Mammary epithelial cell (primary cell): ENCODE measurements at regions of chr20 and their contacts with region 1.

Region 1: DNA sequence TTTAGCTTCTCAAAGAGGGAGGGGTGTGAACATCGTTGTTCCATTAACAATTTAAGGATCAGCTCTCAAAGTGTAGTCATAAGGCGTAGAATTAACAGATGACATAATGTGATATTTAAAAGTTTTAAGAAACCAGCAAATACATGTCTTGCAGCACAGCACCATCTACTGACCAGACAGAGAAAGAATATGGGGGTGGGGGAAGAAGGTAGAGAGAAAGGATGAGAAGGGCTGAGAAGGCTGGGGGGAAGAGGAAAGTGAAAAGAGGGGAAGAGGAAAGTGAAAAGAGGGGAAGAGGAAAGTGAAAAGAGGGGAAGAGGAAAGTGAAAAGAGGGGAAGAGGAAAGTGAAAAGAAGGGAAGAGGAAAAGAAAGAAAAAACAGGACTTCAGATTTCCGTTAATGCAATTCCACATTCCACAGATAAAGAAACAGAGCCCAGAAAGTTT is 80.9 kb downstream of the HAO1 start:
- DNase-seq: peak; percentile 65
- H3K4me3 ChIP-seq: no peak overlapping the region
- H3K27ac ChIP-seq: peak overlapping the region; percentile 36
- H3K4me1 ChIP-seq: peaks cover 44% of the 10 kb centered on the region
- H3K27me3 ChIP-seq: no peaks in the 10 kb centered on the region
- CTCF ChIP-seq: peak; percentile 55 to 77

Region 2: DNA sequence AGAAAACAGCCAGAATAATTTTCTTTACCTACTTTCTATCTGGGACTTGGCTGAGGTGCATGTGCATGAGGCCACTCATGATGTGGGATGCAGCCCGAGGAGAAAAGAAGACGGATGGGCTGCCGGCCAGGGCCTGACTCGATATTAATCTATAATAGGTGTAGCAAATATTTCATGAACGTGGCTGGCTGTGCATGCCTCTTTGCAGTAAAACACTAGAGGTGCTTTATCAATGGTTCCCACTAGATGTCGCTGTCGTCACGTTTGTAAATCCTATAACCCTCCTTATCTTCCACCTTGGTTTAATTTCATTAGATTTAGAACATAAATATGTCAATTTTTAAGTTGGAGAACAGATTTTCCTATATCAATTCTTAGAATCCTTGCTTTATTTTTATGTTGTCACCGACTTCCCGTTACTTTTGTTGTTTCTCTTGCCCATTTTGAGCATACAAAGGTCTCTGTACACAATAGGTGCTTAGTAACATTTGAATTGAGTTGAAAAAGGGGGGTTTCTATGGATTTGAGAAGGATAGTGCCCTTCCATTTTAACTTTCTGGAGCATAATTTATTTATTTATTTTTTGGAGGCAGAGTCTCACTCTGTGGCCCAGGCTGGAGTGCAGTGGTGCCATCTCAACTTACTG is 1716.9 kb before region 1 on chr20:
- CTCF ChIA-PET with region 1: no interaction called
- dilution Hi-C with region 1: no loop called
- in situ Hi-C with region 1: no loop called
- intact Hi-C with region 1: loop called (anchors 10 kb)
- DNase-seq: peak; percentile 36
- H3K4me3 ChIP-seq: no peak overlapping the region
- H3K27ac ChIP-seq: no peak overlapping the region
- H3K4me1 ChIP-seq: no peaks in the 10 kb centered on the region
- H3K27me3 ChIP-seq: no peaks in the 10 kb centered on the region
- CTCF ChIP-seq: peak; percentile 76 to 88

Region 3: GRCh38 chr20:6828794-6829423 is 1030.5 kb before region 1 on chr20:
- CTCF ChIA-PET with region 1: no interaction called
- dilution Hi-C with region 1: no loop called
- in situ Hi-C with region 1: no loop called
- intact Hi-C with region 1: loop called (anchors 1 kb)
- DNase-seq: peak; percentile 68
- H3K4me3 ChIP-seq: no peak overlapping the region
- H3K27ac ChIP-seq: peak overlapping the region; percentile 39
- H3K4me1 ChIP-seq: peaks cover 11% of the 10 kb centered on the region
- H3K27me3 ChIP-seq: no peaks in the 10 kb centered on the region
- CTCF ChIP-seq: peak; percentile 73 to 76

Region 4: DNA sequence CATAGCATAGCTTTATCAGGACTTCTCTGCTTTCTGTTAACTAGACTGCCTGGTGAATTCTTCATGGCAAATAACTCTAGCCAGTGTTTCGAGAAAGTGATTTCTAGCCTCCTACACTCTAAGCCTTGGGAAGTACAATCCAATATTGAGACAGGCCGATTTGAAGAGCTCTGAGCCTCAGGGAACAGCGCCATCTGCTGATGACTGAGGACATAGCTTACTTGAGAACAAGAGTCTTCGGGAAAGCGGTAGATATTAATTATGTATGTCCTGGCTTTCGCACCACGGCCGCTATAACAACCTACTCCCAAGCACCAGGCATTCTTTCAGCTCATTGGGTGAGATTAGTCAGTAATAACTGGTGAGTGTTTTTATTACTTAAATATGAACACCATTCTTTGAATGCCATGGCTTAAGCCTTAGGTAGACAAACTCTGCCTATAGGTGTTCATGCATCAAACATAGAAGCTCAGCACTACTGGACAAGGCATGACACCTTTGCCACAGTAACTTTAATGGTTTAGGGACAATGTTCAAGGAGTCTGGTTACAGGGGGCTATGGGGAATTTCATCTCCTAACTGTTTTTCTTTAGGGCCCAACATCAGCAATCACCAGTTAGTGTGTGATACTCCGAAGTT is 573.3 kb before region 1 on chr20:
- CTCF ChIA-PET with region 1: no interaction called
- dilution Hi-C with region 1: no loop called
- in situ Hi-C with region 1: no loop called
- intact Hi-C with region 1: loop called (anchors 5 kb)
- DNase-seq: peak; percentile 71
- H3K4me3 ChIP-seq: no peak overlapping the region
- H3K27ac ChIP-seq: no peak overlapping the region
- H3K4me1 ChIP-seq: no peaks in the 10 kb centered on the region
- H3K27me3 ChIP-seq: no peaks in the 10 kb centered on the region
- CTCF ChIP-seq: peak; percentile 92 to 93

Region 5: DNA sequence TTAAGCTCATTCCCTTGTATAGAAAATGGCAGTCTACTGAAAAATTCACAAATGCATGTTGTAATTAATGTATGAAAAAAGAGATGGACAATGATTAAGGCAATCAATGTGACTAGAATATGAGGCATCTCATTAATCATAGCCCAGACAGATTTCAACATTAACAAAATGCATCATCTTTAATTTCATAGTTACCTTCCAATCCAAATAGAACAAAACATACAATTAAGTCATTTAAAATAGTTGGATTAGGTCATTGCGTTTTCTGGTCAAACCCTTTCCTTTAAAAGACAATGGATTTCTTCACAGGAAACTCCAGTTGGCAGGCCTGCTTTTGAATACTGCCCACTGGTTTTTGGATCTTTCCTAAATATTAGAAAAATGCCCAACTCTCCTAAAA is 123.0 kb before region 1 on chr20:
- CTCF ChIA-PET with region 1: no interaction called
- dilution Hi-C with region 1: no loop called
- in situ Hi-C with region 1: no loop called
- intact Hi-C with region 1: loop called (anchors 1 kb)
- DNase-seq: peak; percentile 86
- H3K4me3 ChIP-seq: no peak overlapping the region
- H3K27ac ChIP-seq: peak overlapping the region; percentile 95
- H3K4me1 ChIP-seq: peaks cover 28% of the 10 kb centered on the region
- H3K27me3 ChIP-seq: no peaks in the 10 kb centered on the region
- CTCF ChIP-seq: no peak

Region 6: DNA sequence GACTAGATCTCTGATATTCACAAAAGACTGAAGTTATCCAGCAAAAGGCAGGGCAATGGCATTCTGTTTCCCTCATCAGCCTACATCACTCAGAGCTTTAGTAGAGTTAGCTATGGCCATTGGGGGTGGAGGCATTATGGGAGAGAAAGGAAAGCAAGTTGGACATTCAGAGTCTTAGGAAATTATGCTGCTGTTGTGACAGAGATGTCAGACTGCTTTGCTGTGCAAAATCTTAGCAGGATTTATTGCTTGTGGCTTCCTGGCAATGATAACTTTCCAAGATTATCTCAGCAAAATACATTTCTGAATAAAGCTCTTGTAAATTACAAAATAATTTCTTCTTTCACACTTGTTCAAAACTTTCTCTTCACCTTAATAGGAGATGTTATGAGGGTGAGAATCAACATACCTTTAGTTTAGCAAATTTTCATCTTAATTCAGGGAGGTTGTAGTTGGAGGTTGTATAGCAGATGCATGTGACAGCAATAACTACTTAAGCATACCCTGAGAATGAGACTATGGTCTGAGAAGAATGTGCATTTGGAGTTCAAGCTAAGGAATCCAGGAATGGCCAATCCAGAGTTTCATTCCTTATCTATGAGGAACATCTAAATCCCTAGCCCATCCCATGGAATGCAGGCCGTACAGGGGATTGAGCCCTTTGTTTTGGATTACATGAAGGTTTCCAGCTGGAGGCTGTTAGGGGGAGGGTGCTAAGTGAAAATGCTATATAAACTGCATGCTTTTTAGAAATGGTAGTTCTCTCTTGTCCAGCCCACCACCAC is 98.9 kb before region 1 on chr20:
- CTCF ChIA-PET with region 1: no interaction called
- dilution Hi-C with region 1: no loop called
- in situ Hi-C with region 1: no loop called
- intact Hi-C with region 1: no loop called
- DNase-seq: no peak
- H3K4me3 ChIP-seq: no peak overlapping the region
- H3K27ac ChIP-seq: no peak overlapping the region
- H3K4me1 ChIP-seq: no peaks in the 10 kb centered on the region
- H3K27me3 ChIP-seq: no peaks in the 10 kb centered on the region
- CTCF ChIP-seq: no peak

Region 7: GRCh38 chr20:7911586-7912330 is 52.4 kb after region 1 on chr20:
- CTCF ChIA-PET with region 1: no interaction called
- dilution Hi-C with region 1: no loop called
- in situ Hi-C with region 1: no loop called
- intact Hi-C with region 1: no loop called
- DNase-seq: peak; percentile 81
- H3K4me3 ChIP-seq: no peak overlapping the region
- H3K27ac ChIP-seq: peak overlapping the region; percentile 63
- H3K4me1 ChIP-seq: peaks cover 24% of the 10 kb centered on the region
- H3K27me3 ChIP-seq: no peaks in the 10 kb centered on the region
- CTCF ChIP-seq: no peak

Region 8: DNA sequence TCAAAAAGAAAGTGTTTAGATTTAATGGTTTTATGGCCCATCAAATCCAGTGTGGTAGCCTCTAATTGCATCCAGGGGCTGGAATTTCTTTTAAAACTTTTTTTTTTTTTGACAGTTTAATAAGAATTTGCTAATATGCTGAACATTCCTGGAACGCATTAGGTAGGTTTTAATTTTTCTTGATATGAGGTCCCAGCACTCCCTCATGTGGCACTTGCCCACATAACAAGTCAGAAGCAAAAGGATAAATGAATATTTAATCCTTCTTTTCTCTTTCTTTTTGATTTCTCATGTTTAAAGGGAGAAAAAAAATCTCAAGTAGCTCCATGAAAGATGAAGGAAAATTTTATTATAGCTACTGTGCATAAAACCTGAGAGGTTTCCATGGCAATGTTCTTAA is 67.4 kb after region 1 on chr20:
- CTCF ChIA-PET with region 1: no interaction called
- dilution Hi-C with region 1: no loop called
- in situ Hi-C with region 1: no loop called
- intact Hi-C with region 1: loop called (anchors 2 kb)
- DNase-seq: no peak
- H3K4me3 ChIP-seq: no peak overlapping the region
- H3K27ac ChIP-seq: no peak overlapping the region
- H3K4me1 ChIP-seq: peaks cover 23% of the 10 kb centered on the region
- H3K27me3 ChIP-seq: no peaks in the 10 kb centered on the region
- CTCF ChIP-seq: peak; percentile 67 to 75

Region 9: GRCh38 chr20:8043687-8044282 is 184.4 kb after region 1 on chr20:
- CTCF ChIA-PET with region 1: no interaction called
- dilution Hi-C with region 1: no loop called
- in situ Hi-C with region 1: no loop called
- intact Hi-C with region 1: no loop called
- DNase-seq: peak; percentile 53
- H3K4me3 ChIP-seq: no peak overlapping the region
- H3K27ac ChIP-seq: no peak overlapping the region
- H3K4me1 ChIP-seq: no peaks in the 10 kb centered on the region
- H3K27me3 ChIP-seq: peaks cover 6% of the 10 kb centered on the region
- CTCF ChIP-seq: peak; percentile 60 to 65